ENCODE measurements at regions of chr18 and their contacts with region 1.

Region 1: DNA sequence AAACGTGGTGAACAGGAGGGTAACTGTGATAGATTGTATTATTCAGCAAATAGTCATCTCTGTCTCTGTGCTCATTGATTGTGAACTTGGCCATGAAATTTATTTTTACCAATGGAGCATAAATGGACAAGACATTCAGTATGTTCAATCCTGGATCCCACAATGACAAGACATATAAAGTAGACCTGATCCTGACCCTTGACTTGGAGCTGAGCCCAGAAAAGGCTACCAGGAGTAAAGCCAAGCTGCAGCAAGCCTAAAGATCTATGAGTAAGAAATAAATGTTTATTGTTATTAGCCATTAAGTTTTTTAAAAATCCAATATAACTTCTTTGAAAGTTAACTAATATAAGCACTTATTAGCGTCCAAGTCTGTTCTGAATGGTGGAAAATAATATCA is 531.3 kb downstream of the PIK3C3 start:
- DNase-seq: no peak
- H3K4me3 ChIP-seq: no peak overlapping the region
- H3K4me3 Mint-ChIP-seq: no peak overlapping the region
- H3K27ac Mint-ChIP-seq: no peak overlapping the region
- H3K4me1 ChIP-seq: no peaks in the 10 kb centered on the region
- H3K4me1 Mint-ChIP-seq: no peaks in the 10 kb centered on the region
- H3K27me3 ChIP-seq: no peaks in the 10 kb centered on the region
- H3K27me3 Mint-ChIP-seq: no peaks in the 10 kb centered on the region
- CTCF ChIP-seq: no peak

Region 2: DNA sequence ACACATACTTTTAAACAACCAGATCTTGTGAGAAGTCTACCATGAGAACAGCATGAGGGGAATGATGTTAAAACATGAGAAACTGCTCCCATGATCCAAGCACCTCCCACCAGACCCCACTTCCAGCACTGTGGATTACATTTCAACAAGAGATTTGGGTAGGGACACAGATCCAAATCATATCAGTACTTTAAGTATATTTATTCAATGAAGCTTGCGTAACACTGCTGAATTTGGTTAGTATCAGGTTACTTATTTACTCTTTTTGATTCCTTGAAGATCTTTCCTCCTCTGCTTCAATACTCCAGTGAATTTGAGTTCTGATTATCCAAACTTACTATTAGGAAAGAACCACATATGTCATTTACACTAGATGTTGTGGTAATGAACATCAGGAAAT is 112.7 kb before region 1 on chr18:
- CTCF ChIA-PET with region 1: no interaction called
- POLR2A ChIA-PET with region 1: no interaction called
- intact Hi-C with region 1: no loop called
- DNase-seq: no peak
- H3K4me3 ChIP-seq: no peak overlapping the region
- H3K4me3 Mint-ChIP-seq: no peak overlapping the region
- H3K27ac Mint-ChIP-seq: no peak overlapping the region
- H3K4me1 ChIP-seq: no peaks in the 10 kb centered on the region
- H3K4me1 Mint-ChIP-seq: no peaks in the 10 kb centered on the region
- H3K27me3 ChIP-seq: no peaks in the 10 kb centered on the region
- H3K27me3 Mint-ChIP-seq: no peaks in the 10 kb centered on the region
- CTCF ChIP-seq: no peak

Region 3: DNA sequence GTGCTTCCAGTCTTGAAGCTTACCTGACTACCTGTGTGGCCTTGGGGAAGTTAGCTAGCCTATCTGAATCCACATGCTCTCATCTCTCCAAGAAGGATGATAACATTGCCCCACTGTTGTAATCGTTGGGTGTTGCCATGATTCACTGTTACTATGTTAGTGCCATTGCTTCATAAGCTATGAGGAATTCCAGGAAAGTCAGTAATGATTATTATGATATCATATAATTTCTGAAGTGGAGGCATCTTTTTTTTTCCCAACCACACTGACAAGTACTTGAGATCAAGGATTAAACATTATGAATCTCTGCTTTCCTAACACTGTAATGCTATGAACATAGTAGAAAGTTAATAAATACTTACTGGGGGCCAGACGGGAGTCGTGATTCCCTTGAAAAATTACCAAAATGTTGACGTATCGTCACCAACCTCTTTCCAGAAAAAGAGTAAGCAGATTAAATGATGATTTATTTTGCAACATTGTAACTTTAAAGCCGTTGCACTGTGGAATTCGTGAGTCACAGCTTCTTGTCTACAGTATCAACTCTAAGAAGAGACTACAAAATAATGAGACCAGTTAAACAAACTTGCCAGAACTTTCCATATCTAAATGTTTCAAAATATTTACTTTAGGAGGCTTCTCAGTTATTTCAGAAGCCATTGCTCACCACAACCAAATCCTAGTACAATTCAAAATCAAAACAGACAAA is 71.4 kb before region 1 on chr18:
- CTCF ChIA-PET with region 1: no interaction called
- POLR2A ChIA-PET with region 1: no interaction called
- intact Hi-C with region 1: no loop called
- DNase-seq: no peak
- H3K4me3 ChIP-seq: no peak overlapping the region
- H3K4me3 Mint-ChIP-seq: no peak overlapping the region
- H3K27ac Mint-ChIP-seq: no peak overlapping the region
- H3K4me1 ChIP-seq: 0 out of 2 replicates have a peak, but pooled peaks cover 4% of the 10 kb centered on the region
- H3K4me1 Mint-ChIP-seq: peaks cover 7% of the 10 kb centered on the region
- H3K27me3 ChIP-seq: no peaks in the 10 kb centered on the region
- H3K27me3 Mint-ChIP-seq: no peaks in the 10 kb centered on the region
- CTCF ChIP-seq: no peak

Region 4: GRCh38 chr18:42458226-42458625 is 28.1 kb before region 1 on chr18:
- CTCF ChIA-PET with region 1: no interaction called
- POLR2A ChIA-PET with region 1: no interaction called
- intact Hi-C with region 1: loop called (anchors 1 kb)
- DNase-seq: no peak
- H3K4me3 ChIP-seq: no peak overlapping the region
- H3K4me3 Mint-ChIP-seq: no peak overlapping the region
- H3K27ac Mint-ChIP-seq: no peak overlapping the region
- H3K4me1 ChIP-seq: no peaks in the 10 kb centered on the region
- H3K4me1 Mint-ChIP-seq: no peaks in the 10 kb centered on the region
- H3K27me3 ChIP-seq: no peaks in the 10 kb centered on the region
- H3K27me3 Mint-ChIP-seq: no peaks in the 10 kb centered on the region
- CTCF ChIP-seq: no peak

Measured in Caco-2 (cell line).